T-cell (primary cell): ENCODE measurements at regions of chr9 and their contacts with region 1.

Region 1: GRCh38 chr9:34637356-34638137 is at the start of gene SIGMAR1:
- DNase-seq: peak; percentile 77 to 95 (median 88)
- ATAC-seq: peak; percentile 93 to 96 (median 94)
- H3K4me3 ChIP-seq: peak within 1 kb of the TSS; percentile 64 to 86
- H3K4me3 Mint-ChIP-seq: peak within 1 kb of the TSS; percentile 87 to 90 (median 89)
- H3K27ac ChIP-seq: peak within 1 kb of the TSS; percentile 85
- H3K27ac Mint-ChIP-seq: peak within 1 kb of the TSS; percentile 96
- H3K4me1 ChIP-seq: peaks cover 13 to 40% of the 10 kb centered on the region in 2 experiments
- H3K4me1 Mint-ChIP-seq: peaks cover 29 to 42% (median 30%) of the 10 kb centered on the region in 3 donors
- H3K27me3 ChIP-seq: no peaks in the 10 kb centered on the region
- H3K27me3 Mint-ChIP-seq: no peaks in the 10 kb centered on the region
- total RNA-seq, gene SIGMAR1: 27.7 to 65.9 (median 60.9) TPM

Region 2: DNA sequence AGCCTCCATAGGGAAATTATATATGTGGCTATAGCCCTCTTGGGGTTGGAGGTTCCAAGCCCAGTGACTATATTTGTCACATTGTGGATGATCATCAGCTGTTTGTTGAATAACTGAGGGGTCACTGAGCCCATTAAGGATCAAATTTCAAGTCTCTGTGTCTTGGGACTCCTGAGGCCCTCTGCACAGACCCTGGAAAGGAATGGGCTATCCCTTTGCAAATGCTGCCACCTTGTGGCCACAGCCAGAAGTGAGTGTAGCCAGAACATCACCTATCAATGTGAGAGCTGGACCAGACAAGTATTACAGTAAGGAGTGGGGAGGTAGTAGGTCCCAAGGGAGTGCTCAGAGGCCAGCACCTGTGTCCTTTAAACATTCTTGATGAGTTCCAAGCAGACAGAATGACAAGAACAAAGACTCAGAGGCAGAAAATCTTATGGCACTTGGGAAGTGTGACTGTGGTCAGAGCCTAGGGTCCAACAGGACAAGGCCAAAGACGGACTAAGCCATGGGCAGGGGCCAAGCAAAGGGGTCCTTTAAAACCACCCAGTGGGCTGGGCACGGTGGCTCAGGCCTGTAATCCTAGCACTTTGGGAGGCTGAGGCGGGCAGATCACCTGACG is 33.8 kb before region 1 on chr9:
- CTCF ChIA-PET with region 1: interaction called, 8 to 24 read pairs
- POLR2A ChIA-PET with region 1: interaction called in 1 of 2 experiments, 7 read pairs
- DNase-seq: peak; percentile 42 to 86 (median 71)
- ATAC-seq: peak; percentile 83 to 92 (median 88)
- H3K4me3 ChIP-seq: no peak overlapping the region
- H3K4me3 Mint-ChIP-seq: no peak overlapping the region
- H3K27ac ChIP-seq: no peak overlapping the region
- H3K27ac Mint-ChIP-seq: no peak overlapping the region
- H3K4me1 ChIP-seq: no peaks in the 10 kb centered on the region
- H3K4me1 Mint-ChIP-seq: no peaks in the 10 kb centered on the region
- H3K27me3 ChIP-seq: peaks cover 0 to 9% of the 10 kb centered on the region in 2 experiments
- H3K27me3 Mint-ChIP-seq: peaks cover 5% of the 10 kb centered on the region in 2 donors

Region 3: GRCh38 chr9:34611829-34612630 is 25.5 kb before region 1 on chr9 and contains the start of gene RPP25L:
- CTCF ChIA-PET with region 1: interaction called, 11 to 25 read pairs
- POLR2A ChIA-PET with region 1: interaction called in 1 of 2 experiments, 3 read pairs
- DNase-seq: peak; percentile 59 to 93 (median 79)
- ATAC-seq: peak; percentile 93 to 96 (median 93)
- H3K4me3 ChIP-seq: peak within 1 kb of the TSS; percentile 71 to 94
- H3K4me3 Mint-ChIP-seq: peak within 1 kb of the TSS; percentile 79 to 89 (median 80)
- H3K27ac ChIP-seq: peak within 1 kb of the TSS; percentile 89
- H3K27ac Mint-ChIP-seq: peak within 1 kb of the TSS; percentile 90 to 94
- H3K4me1 ChIP-seq: peaks cover 3 to 26% of the 10 kb centered on the region in 2 experiments
- H3K4me1 Mint-ChIP-seq: peaks cover 19 to 28% (median 25%) of the 10 kb centered on the region in 3 donors
- H3K27me3 ChIP-seq: no peaks in the 10 kb centered on the region
- H3K27me3 Mint-ChIP-seq: no peaks in the 10 kb centered on the region
- total RNA-seq, gene RPP25L: 9.3 to 28.6 (median 22.5) TPM

Region 4: GRCh38 chr9:34620061-34620994 is 17.2 kb before region 1 on chr9 and contains the start of gene DCTN3:
- CTCF ChIA-PET with region 1: interaction called, 17 to 31 read pairs
- POLR2A ChIA-PET with region 1: interaction called in 1 of 2 experiments, 10 read pairs
- DNase-seq: peak; percentile 71 to 96 (median 91)
- ATAC-seq: peak; percentile 98 to 99 (median 99)
- H3K4me3 ChIP-seq: peak within 1 kb of the TSS; percentile 77 to 88
- H3K4me3 Mint-ChIP-seq: peak within 1 kb of the TSS; percentile 93 to 97 (median 95)
- H3K27ac ChIP-seq: peak within 1 kb of the TSS; percentile 38
- H3K27ac Mint-ChIP-seq: peak within 1 kb of the TSS; percentile 38 to 86
- H3K4me1 ChIP-seq: peaks cover 6 to 33% of the 10 kb centered on the region in 2 experiments
- H3K4me1 Mint-ChIP-seq: peaks cover 31 to 32% (median 32%) of the 10 kb centered on the region in 3 donors
- H3K27me3 ChIP-seq: peaks cover 2 to 42% of the 10 kb centered on the region in 2 experiments
- H3K27me3 Mint-ChIP-seq: peaks cover 20 to 33% of the 10 kb centered on the region in 2 donors
- total RNA-seq, gene DCTN3: 60.8 to 82.9 (median 69.0) TPM

Region 5: GRCh38 chr9:34659592-34660535 is 22.3 kb after region 1 on chr9:
- CTCF ChIA-PET with region 1: interaction called, 8 to 11 read pairs
- POLR2A ChIA-PET with region 1: interaction called, 3 to 12 read pairs
- DNase-seq: no peak
- ATAC-seq: no peak
- H3K4me3 ChIP-seq: no peak overlapping the region
- H3K4me3 Mint-ChIP-seq: no peak overlapping the region
- H3K27ac ChIP-seq: no peak overlapping the region
- H3K27ac Mint-ChIP-seq: peak overlapping the region; percentile 94 to 97
- H3K4me1 ChIP-seq: peaks cover 19 to 34% of the 10 kb centered on the region in 2 experiments
- H3K4me1 Mint-ChIP-seq: peaks cover 34 to 49% (median 46%) of the 10 kb centered on the region in 3 donors
- H3K27me3 ChIP-seq: no peaks in the 10 kb centered on the region
- H3K27me3 Mint-ChIP-seq: no peaks in the 10 kb centered on the region

Region 6: GRCh38 chr9:34665381-34666250 is 28.1 kb after region 1 on chr9:
- CTCF ChIA-PET with region 1: interaction called, 8 to 11 read pairs
- POLR2A ChIA-PET with region 1: interaction called, 3 read pairs
- DNase-seq: peak; percentile 66 to 95 (median 87)
- ATAC-seq: peak; percentile 80 to 88 (median 84)
- H3K4me3 ChIP-seq: peak overlapping the region; percentile 71 to 80
- H3K4me3 Mint-ChIP-seq: peak overlapping the region; percentile 82 to 90 (median 86)
- H3K27ac ChIP-seq: peak overlapping the region; percentile 97
- H3K27ac Mint-ChIP-seq: peak overlapping the region; percentile 87 to 88
- H3K4me1 ChIP-seq: peaks cover 19 to 52% of the 10 kb centered on the region in 2 experiments
- H3K4me1 Mint-ChIP-seq: peaks cover 47 to 60% (median 47%) of the 10 kb centered on the region in 3 donors
- H3K27me3 ChIP-seq: no peaks in the 10 kb centered on the region
- H3K27me3 Mint-ChIP-seq: no peaks in the 10 kb centered on the region